A549 (cell line): ENCODE measurements at regions of chr10 and their contacts with region 1.

Region 1: DNA sequence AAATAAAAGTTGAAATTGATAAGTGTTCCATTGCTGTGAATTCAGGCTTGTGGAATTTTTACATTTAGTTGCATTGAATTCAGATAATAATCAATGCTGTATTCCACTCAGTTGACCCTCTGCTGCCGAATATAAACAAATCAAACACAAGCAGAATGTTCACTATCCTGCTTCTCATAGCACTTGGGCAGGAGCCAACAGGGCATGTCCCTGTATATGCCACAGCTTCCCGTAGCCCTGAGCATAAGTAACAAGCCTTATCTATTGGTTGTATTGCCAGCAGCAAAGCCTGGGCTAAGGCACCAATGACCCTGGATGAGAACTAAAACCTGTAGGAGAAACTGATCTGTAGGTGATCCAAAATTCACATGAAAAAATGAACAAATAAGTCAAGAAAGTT is 145.9 kb downstream of the ARHGAP12 start:
- DNase-seq: no peak
- ATAC-seq: no peak
- H3K4me3 ChIP-seq: no peak overlapping the region
- H3K27ac ChIP-seq: no peak overlapping the region
- H3K4me1 ChIP-seq: no peaks in the 10 kb centered on the region
- CTCF ChIP-seq: no peak
- EP300 ChIP-seq: no peak
- POLR2A ChIP-seq: no peak
- RAD21 ChIP-seq: no peak

Region 2: GRCh38 chr10:31770307-31770902 is 12.3 kb before region 1 on chr10:
- CTCF ChIA-PET with region 1: interaction called, 17 read pairs
- POLR2A ChIA-PET with region 1: no interaction called
- DNase-seq: peak in 1 of 2 experiments; percentile 53
- ATAC-seq: peak; percentile 75 to 83; a peak in 5 of 6 replicates
- H3K4me3 ChIP-seq: no peak overlapping the region
- H3K27ac ChIP-seq: no peak overlapping the region
- H3K4me1 ChIP-seq: peaks cover 16% of the 10 kb centered on the region
- CTCF ChIP-seq: peak; percentile 51
- EP300 ChIP-seq: no peak
- POLR2A ChIP-seq: no peak
- RAD21 ChIP-seq: peak; percentile 54 to 65; a peak in 4 of 5 replicates

Region 3: GRCh38 chr10:32155042-32155531 is 372.4 kb after region 1 on chr10:
- CTCF ChIA-PET with region 1: no interaction called
- POLR2A ChIA-PET with region 1: no interaction called
- DNase-seq: no peak
- ATAC-seq: no peak
- H3K4me3 ChIP-seq: no peak overlapping the region
- H3K27ac ChIP-seq: no peak overlapping the region
- H3K4me1 ChIP-seq: peaks cover 9% of the 10 kb centered on the region; the same call in 2 of the 3 replicates
- CTCF ChIP-seq: no peak
- EP300 ChIP-seq: no peak
- POLR2A ChIP-seq: no peak
- RAD21 ChIP-seq: no peak